ENCODE measurements at regions of chr15 and their contacts with region 1.

Region 1: GRCh38 chr15:63610200-63610841 is 13.1 kb downstream of the FBXL22 start:
- DNase-seq: peak; percentile 90
- ATAC-seq: peak; percentile 91
- H3K4me3 Mint-ChIP-seq: peak overlapping the region; percentile 12
- H3K27ac Mint-ChIP-seq: peak overlapping the region; percentile 94
- H3K4me1 Mint-ChIP-seq: peaks cover 46% of the 10 kb centered on the region
- H3K27me3 Mint-ChIP-seq: no peaks in the 10 kb centered on the region

Region 2: DNA sequence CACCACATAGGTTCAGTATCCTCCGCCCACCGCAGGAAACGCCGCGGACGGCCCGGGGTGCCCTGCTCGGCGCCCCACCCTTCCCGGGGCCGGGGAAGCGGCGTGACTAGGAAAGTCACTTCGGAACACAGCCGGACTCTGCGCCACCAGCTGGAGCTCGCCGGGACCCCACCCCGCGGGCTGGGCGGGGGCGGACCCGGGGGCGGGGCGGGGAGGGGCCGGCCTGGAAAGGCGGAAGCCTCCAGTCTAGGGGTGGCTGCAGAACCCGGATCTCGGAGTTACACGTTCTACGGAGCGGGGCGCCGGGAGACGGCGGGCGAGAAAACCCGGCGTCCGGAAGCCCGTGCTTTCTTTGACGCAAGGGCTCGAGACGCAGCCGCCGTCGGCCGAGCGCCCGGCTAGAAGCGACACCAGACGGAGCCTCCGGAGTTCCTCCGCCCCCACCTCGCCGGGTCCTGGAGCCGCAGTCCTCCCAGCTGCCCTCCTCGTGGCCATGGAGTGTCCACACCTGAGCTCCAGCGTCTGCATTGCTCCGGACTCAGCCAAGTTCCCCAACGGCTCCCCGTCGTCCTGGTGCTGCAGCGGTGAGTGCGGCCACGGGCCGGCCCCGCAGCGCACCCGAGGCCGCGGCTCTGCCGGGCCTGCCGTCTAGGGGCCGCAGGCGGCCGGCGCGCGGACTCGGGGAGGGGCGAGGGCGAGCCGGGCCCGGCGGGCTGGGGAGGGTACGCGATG is 105.9 kb before region 1 on chr15 and contains the start of gene USP3:
- CTCF ChIA-PET with region 1: interaction called, 10 read pairs
- POLR2A ChIA-PET with region 1: no interaction called
- DNase-seq: peak; percentile 94
- ATAC-seq: peak; percentile 66
- H3K4me3 Mint-ChIP-seq: peak within 1 kb of the TSS; percentile 89
- H3K27ac Mint-ChIP-seq: peak within 1 kb of the TSS; percentile 98
- H3K4me1 Mint-ChIP-seq: peaks cover 81% of the 10 kb centered on the region
- H3K27me3 Mint-ChIP-seq: no peaks in the 10 kb centered on the region
- total RNA-seq, gene USP3: 48.3 to 49.1 TPM

Region 3: GRCh38 chr15:63668601-63669000 is 58.3 kb after region 1 on chr15:
- CTCF ChIA-PET with region 1: interaction called, 22 read pairs
- POLR2A ChIA-PET with region 1: interaction called, 3 read pairs
- DNase-seq: no peak
- ATAC-seq: peak; percentile 58
- H3K4me3 Mint-ChIP-seq: peak overlapping the region; percentile 68
- H3K27ac Mint-ChIP-seq: peak overlapping the region; percentile 91
- H3K4me1 Mint-ChIP-seq: peaks cover 44% of the 10 kb centered on the region
- H3K27me3 Mint-ChIP-seq: no peaks in the 10 kb centered on the region

Region 4: GRCh38 chr15:63708126-63708772 is 97.9 kb after region 1 on chr15:
- CTCF ChIA-PET with region 1: interaction called, 10 read pairs
- POLR2A ChIA-PET with region 1: no interaction called
- DNase-seq: peak; percentile 47
- ATAC-seq: peak; percentile 73
- H3K4me3 Mint-ChIP-seq: peak overlapping the region; percentile 6
- H3K27ac Mint-ChIP-seq: peak overlapping the region; percentile 88
- H3K4me1 Mint-ChIP-seq: peaks cover 25% of the 10 kb centered on the region
- H3K27me3 Mint-ChIP-seq: no peaks in the 10 kb centered on the region

Region 5: DNA sequence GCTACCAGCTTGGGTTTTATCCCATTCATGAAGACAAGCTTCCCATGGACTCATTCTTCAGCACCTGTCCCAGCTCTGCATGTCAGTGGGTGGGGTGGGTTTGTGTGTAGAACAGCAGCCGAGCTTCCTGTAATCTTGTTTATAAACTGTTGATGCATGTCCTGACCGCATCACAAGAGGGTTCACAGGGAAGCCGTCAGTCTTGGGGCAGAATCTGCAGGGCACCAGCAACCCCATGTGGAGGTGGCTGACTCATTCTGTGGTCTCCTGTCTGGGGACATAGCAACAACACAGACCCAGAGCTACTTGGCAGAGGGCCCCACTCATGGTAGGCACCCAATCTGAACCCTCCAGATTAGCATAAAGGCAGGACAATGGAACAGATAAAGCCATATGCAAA is 400.4 kb after region 1 on chr15:
- CTCF ChIA-PET with region 1: interaction called, 11 read pairs
- POLR2A ChIA-PET with region 1: no interaction called
- DNase-seq: peak; percentile 92
- ATAC-seq: peak; percentile 100
- H3K4me3 Mint-ChIP-seq: peak overlapping the region; percentile 7
- H3K27ac Mint-ChIP-seq: peak overlapping the region; percentile 75
- H3K4me1 Mint-ChIP-seq: peaks cover 37% of the 10 kb centered on the region
- H3K27me3 Mint-ChIP-seq: peaks cover 5% of the 10 kb centered on the region

Region 6: GRCh38 chr15:64067564-64068030 is 457.3 kb after region 1 on chr15:
- CTCF ChIA-PET with region 1: interaction called, 132 read pairs
- POLR2A ChIA-PET with region 1: interaction called, 3 read pairs
- DNase-seq: peak; percentile 79
- ATAC-seq: peak; percentile 89
- H3K4me3 Mint-ChIP-seq: no peak overlapping the region
- H3K27ac Mint-ChIP-seq: peak overlapping the region; percentile 71
- H3K4me1 Mint-ChIP-seq: peaks cover 26% of the 10 kb centered on the region
- H3K27me3 Mint-ChIP-seq: no peaks in the 10 kb centered on the region

Measured in activated CD8-positive, alpha-beta T cell treated with anti-CD3 and anti-CD28 coated beads, Interleukin-2, amount 10 ng/mL, durations not matched to agents 7 days and 5 days (primary cell).